ENCODE measurements at regions of chr13 and their contacts with region 1.

Region 1: GRCh38 chr13:106536244-106537034 is 977 bp upstream of the EFNB2 start:
- DNase-seq: peak; percentile 88
- H3K4me3 Mint-ChIP-seq: peak overlapping the region; percentile 78
- H3K27ac Mint-ChIP-seq: no peak overlapping the region
- H3K4me1 Mint-ChIP-seq: peaks cover 16% of the 10 kb centered on the region
- H3K27me3 Mint-ChIP-seq: peaks cover 26% of the 10 kb centered on the region

Region 2: GRCh38 chr13:104773775-104774174 is 1762.7 kb before region 1 on chr13:
- CTCF ChIA-PET with region 1: interaction called, 4 read pairs
- intact Hi-C with region 1: loop called (anchors 1 kb)
- DNase-seq: no peak
- H3K4me3 Mint-ChIP-seq: no peak overlapping the region
- H3K27ac Mint-ChIP-seq: no peak overlapping the region
- H3K4me1 Mint-ChIP-seq: peaks cover 5% of the 10 kb centered on the region
- H3K27me3 Mint-ChIP-seq: no peaks in the 10 kb centered on the region

Region 3: GRCh38 chr13:105139380-105140285 is 1396.8 kb before region 1 on chr13:
- CTCF ChIA-PET with region 1: no interaction called
- intact Hi-C with region 1: loop called (anchors 1 kb)
- DNase-seq: peak; percentile 74
- H3K4me3 Mint-ChIP-seq: peak overlapping the region; percentile 89
- H3K27ac Mint-ChIP-seq: peak overlapping the region; percentile 99
- H3K4me1 Mint-ChIP-seq: peaks cover 17% of the 10 kb centered on the region
- H3K27me3 Mint-ChIP-seq: no peaks in the 10 kb centered on the region

Region 4: GRCh38 chr13:106083620-106084350 is 452.7 kb before region 1 on chr13:
- CTCF ChIA-PET with region 1: interaction called, 4 read pairs
- intact Hi-C with region 1: loop called (anchors 1 kb)
- DNase-seq: peak; percentile 19
- H3K4me3 Mint-ChIP-seq: no peak overlapping the region
- H3K27ac Mint-ChIP-seq: no peak overlapping the region
- H3K4me1 Mint-ChIP-seq: no peaks in the 10 kb centered on the region
- H3K27me3 Mint-ChIP-seq: peaks cover 5% of the 10 kb centered on the region

Region 5: DNA sequence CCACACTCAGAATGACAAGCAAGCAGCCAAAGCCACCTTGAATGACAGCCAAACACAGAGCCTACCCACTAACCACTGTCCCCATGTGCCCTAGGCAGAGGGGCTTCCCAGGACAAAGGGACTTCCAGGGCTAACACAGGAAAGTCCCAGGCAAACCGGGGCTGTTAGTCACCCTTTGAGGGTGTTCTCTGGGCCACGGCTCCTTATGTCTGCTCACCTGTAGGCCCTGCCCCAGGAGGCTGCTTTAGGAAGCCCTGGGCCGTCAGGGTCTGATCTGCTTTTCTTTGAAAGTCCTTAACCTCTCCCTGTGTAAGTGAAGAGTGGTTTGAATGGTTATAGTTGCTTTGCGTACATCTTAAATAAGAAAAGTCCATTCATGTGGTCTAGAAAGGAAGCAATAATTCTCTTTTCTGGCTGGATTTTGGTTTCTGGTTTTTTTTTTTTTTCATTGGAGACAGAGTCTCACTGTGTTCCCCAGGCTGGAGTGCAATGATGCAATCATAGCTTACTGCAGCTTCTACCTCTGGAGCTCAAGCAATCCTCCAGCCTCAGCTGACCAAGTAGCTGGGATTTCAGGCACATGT is 162.4 kb before region 1 on chr13:
- CTCF ChIA-PET with region 1: no interaction called
- intact Hi-C with region 1: loop called (anchors 10 kb)
- DNase-seq: peak; percentile 55
- H3K4me3 Mint-ChIP-seq: no peak overlapping the region
- H3K27ac Mint-ChIP-seq: no peak overlapping the region
- H3K4me1 Mint-ChIP-seq: peaks cover 3% of the 10 kb centered on the region
- H3K27me3 Mint-ChIP-seq: peaks cover 19% of the 10 kb centered on the region

Region 6: GRCh38 chr13:106619688-106620555 is 83.5 kb after region 1 on chr13:
- CTCF ChIA-PET with region 1: interaction called, 5 read pairs
- intact Hi-C with region 1: loop called (anchors 1 kb)
- DNase-seq: peak; percentile 25
- H3K4me3 Mint-ChIP-seq: no peak overlapping the region
- H3K27ac Mint-ChIP-seq: no peak overlapping the region
- H3K4me1 Mint-ChIP-seq: peaks cover 2% of the 10 kb centered on the region
- H3K27me3 Mint-ChIP-seq: peaks cover 17% of the 10 kb centered on the region

Region 7: GRCh38 chr13:107205303-107206104 is 669.1 kb after region 1 on chr13:
- CTCF ChIA-PET with region 1: no interaction called
- intact Hi-C with region 1: no loop called
- DNase-seq: peak; percentile 67
- H3K4me3 Mint-ChIP-seq: no peak overlapping the region
- H3K27ac Mint-ChIP-seq: no peak overlapping the region
- H3K4me1 Mint-ChIP-seq: no peaks in the 10 kb centered on the region
- H3K27me3 Mint-ChIP-seq: peaks cover 18% of the 10 kb centered on the region